Right ventricle myocardium inferior (tissue), 1 donor: ENCODE measurements at regions of chr6 and their contacts with region 1.

Region 1: DNA sequence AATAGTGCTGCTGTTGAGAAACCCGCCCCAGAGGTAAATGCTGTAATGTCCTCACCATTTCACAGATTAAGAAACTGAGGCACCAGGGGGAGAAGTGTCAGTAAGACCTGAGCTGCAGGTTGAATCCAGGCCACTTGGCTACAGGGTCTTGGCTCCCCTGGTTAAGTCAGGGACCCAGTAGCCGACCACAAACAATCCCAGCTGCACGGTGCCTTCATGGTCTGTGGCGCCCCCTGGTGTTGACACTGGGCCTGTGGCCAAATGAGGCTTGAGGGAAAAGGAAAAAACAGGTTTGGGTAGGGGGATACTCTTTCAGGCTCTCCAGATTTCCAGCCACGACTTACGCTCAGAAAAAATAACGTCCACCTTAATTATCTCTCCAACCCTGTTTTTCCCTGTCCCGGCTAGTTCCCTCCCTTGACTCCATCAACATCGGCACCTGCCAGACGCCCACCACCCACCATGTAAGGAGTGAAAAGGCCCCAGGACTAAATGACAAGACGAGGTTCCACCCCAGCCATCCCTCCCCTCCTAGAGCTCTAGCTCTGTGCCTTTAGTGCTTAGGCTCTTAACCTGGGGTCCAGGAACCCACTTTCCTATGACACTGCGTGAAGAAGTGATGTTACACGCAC is 47.7 kb upstream of the POLR1H start:
- DNase-seq: no peak
- ATAC-seq: no peak

Region 2: DNA sequence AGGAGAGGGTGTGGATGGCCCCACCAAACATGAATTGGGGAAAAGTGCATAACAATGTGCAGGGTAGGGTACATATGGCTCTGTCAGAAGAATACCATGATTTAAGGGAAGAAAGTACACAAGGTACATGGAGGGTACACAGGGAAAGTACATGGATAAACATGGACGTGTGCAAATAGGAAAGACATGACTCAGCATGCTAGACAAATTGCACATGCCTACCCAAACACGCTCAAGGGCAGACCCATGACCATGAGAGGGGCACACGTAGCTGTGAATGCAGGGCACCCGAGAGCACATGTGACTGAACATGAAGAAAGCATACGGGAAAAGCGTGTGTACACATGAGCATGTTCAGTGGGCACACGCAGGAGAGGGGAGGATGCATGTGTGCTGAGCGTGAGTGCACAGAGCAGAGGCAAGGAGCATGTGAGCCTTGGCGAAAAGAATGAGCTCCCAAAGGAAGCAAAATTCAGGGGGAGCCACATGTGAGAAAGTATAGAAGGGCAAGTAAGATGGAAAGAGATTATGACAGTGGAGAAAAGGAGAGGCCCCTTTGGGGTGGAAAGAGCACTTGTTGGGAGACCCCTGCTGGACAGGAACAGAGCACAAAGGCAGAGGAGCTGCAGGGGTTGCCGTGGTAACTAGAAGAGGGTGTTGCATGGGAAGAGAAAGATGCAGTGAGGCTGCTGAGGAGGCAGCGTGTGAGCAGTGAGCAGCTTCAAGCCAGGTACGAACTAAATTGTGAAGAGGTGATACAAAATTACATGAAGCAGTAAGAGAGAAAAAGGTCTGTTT is 410.6 kb before region 1 on chr6:
- intact Hi-C with region 1: no loop called
- DNase-seq: no peak
- ATAC-seq: no peak

Region 3: DNA sequence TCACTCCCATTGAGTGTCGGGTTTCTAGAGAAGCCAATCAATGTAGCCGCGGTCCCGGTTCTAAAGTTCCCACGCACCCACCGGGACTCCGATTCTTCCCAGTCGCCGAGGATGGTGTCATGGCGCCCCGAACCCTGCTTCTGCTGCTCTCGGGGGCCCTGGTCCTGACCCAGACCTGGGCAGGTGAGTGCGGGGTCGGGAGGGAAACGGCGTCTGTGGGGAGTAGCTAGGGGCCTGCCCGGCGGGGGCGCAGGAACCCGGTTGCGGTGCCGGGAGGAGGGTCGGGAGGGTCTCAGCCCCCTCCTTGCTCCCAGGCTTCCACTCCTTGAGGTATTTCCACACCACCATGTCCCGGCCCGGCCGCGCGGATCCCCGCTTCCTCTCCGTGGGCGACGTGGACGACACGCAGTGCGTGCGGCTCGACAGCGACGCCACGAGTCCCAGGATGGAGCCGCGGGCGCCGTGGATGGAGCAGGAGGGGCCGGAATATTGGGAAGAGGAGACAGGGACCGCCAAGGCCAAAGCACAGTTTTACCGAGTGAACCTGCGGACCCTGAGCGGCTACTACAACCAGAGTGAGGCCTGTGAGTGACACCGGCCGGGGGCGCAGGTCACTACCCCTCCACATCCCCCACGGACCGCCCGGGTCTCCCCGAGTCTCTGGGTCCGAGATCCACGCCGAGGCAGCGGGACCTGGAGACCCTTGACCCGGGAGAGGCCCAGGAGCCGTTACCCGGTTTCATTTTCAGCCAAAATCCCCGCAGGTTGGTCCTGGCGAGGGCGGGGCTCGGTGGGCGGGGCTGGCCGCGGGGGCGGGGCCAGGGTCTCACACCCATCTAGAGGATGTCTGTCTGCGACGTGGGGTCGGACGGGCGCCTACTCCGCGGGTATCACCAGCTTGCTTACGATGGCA is 221.0 kb before region 1 on chr6:
- intact Hi-C with region 1: no loop called
- DNase-seq: peak; percentile 88
- ATAC-seq: peak; percentile 96

Region 4: DNA sequence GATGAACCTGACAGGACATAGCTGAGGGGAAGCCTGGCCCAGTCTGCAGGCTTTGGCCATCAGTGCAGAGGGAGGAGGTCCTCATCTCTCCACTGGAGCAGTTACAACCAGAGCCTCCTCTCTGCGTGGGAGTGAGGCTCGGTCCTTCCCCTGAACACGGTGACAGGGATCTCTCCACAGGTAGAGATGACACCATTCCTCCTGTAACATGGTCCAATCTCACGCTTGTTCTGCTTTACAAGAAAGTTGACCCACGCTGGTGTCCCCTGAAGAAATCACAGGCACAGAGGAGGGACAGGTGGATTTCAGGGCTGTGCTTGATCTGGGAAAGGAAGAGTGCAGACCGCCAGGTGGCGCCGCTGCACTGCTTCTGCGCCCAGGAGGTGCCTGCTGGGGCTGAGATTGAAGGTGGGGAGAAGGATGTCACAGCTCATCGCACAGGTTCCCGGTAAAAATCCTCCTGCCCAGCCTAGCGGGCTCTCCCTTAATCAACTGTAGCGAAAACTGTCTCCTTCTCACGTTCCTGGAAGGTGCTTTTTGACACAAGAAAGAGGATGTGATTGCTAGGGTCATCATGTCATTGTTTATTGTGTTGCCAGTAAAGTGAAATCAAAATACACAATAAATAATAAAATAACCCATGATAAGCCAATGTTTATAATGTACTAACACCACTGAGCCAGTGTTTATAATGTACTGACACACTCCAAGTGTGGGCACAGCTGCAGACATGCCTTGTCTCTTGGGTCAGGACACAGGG is 165.4 kb before region 1 on chr6:
- intact Hi-C with region 1: loop called (anchors 1 kb)
- DNase-seq: peak; percentile 92
- ATAC-seq: peak; percentile 89